Psoas muscle (tissue), 8 donors: ENCODE measurements at regions of chr4 and their contacts with region 1.

Region 1: GRCh38 chr4:87679449-87680169 is 29.5 kb downstream of the DMP1 start:
- DNase-seq: peak; percentile 53 to 75
- ATAC-seq: peak; percentile 32 to 88 (median 61)
- H3K4me3 ChIP-seq: no peak overlapping the region
- H3K27ac ChIP-seq: no peak overlapping the region
- H3K4me1 ChIP-seq: no peaks in the 10 kb centered on the region
- H3K27me3 ChIP-seq: no peaks in the 10 kb centered on the region
- CTCF ChIP-seq: peak; percentile 74

Region 2: GRCh38 chr4:87543835-87544461 is 135.7 kb before region 1 on chr4:
- intact Hi-C with region 1: loop called in 1 of 2 experiments (anchors 5 kb)
- DNase-seq: no peak
- ATAC-seq: peak in 3 of 4 donors; percentile 37 to 58 (median 51)
- H3K4me3 ChIP-seq: no peak overlapping the region
- H3K27ac ChIP-seq: no peak overlapping the region
- H3K4me1 ChIP-seq: no peaks in the 10 kb centered on the region
- H3K27me3 ChIP-seq: no peaks in the 10 kb centered on the region
- CTCF ChIP-seq: peak; percentile 49

Region 3: DNA sequence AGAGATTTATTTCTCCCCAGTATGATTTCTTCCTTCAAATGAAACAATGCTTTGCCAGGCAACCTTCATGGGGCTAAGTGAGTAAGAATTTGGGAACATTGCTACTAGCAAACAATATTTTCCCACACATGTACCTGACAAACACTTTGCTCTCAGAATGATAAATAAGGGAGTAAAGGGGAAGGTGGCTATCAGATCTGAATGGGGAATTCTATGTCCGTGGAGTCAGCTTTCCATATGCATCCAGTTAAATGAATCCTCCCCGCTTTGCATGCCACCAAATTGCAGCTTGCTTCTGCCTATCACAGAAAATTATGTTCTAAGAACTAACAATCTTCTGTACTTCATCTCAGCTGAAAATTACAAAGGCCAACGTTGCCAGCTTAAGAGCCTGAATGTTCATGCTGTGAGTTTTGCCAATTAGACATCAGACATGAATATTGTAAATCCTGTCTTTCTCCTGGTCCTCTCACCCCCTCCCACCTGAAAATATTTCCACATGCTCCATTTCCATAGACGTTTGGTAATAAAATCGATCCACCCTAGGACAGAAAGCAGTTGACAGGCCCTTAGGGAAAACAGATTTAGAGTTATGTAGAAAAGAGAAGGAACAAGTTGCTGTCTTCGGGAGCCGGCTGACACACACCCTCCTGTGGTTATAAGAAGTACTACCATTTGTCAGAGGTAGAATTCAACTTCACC is 159.4 kb after region 1 on chr4:
- intact Hi-C with region 1: loop called (anchors 2 to 5 kb)
- DNase-seq: peak in 1 of 2 donors; percentile 17
- ATAC-seq: peak in 2 of 4 donors; percentile 52 to 76
- H3K4me3 ChIP-seq: no peak overlapping the region
- H3K27ac ChIP-seq: no peak overlapping the region
- H3K4me1 ChIP-seq: no peaks in the 10 kb centered on the region
- H3K27me3 ChIP-seq: no peaks in the 10 kb centered on the region
- CTCF ChIP-seq: peak; percentile 66

Region 4: DNA sequence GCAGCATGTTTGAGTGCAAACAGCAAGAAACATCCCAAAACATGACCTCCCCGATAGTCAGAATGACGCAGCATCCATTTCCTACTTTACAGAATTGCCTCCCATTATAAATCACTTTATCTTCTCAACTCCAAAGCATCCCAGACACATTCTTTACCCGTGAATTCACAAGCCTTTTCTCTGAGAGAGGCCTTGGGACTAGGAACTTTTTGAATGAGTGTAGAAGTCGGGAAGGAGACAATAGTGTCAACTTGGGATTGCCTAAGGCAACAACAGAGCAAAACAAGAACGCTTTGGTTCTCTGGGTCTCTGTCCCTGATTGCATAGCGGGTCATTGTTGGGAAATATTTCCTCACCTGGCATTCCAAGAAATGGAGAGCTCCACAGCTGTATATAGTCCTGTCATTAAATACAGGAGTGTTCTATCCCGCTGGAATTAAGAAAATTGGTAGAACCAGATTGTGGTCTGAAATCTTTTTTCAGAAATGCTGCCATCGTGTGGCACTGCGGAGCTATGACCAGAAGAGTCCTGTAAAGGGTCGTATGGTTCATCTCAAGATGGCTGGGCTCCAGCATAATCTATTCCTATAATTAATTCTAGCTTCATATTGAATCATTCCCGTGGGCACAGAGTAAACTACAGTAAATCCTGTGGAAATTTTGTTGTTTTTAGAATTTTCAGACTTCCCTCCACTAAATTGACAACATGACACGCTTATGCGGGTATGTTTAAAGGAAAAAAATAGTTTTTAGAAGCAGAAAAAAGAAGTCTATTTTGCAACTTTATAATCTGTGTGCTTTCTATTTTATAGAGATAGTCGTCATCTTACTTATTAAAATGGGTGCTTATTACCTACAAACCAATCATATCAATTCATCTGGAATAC is 293.9 kb after region 1 on chr4:
- intact Hi-C with region 1: loop called in 1 of 2 experiments (anchors 10 kb)
- DNase-seq: peak in 1 of 2 donors; percentile 35
- ATAC-seq: peak in 3 of 4 donors; percentile 56 to 70 (median 65)
- H3K4me3 ChIP-seq: no peak overlapping the region
- H3K27ac ChIP-seq: no peak overlapping the region
- H3K4me1 ChIP-seq: no peaks in the 10 kb centered on the region
- H3K27me3 ChIP-seq: no peaks in the 10 kb centered on the region
- CTCF ChIP-seq: peak; percentile 84